ENCODE measurements at regions of chr12 and their contacts with region 1.

Region 1: DNA sequence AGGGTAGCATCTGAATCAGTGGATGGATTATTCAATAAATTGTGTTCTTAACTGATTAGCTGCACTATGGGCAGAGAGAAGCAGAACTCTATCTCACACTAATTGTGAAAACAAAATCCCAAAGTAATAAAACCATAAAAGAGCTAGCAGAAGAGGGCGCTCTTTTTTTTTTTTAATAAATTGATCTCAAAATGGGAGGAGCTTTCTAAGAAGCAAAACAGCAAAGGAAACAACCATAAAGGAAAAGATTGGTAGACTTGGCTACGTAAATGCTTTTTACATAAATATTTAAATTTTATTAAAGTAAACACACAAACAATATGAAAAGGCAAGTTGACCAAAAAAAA is 1.5 kb upstream of the TM7SF3 start:
- DNase-seq: no peak
- H3K4me3 ChIP-seq: no peak overlapping the region
- CTCF ChIP-seq: no peak
- POLR2A ChIP-seq: no peak

Region 2: DNA sequence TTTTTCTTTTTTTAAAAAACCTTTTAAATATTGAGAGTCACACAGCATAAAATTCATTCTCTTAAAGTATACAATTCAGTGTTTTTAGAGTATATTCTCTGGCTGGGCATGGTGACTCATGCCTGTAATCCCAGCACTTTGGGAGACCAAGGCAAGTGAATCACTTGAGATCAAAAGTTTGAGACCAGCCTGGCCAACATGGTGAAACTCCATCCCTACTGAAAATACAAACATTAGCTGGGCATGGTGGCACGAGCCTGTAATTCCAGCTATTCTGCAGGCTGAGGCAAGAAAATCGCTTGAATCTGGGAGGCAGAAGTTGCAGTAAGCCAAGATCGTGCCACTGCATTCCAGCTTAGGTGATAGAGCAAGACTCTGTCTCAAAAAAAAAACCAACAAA is 1998.4 kb before region 1 on chr12:
- intact Hi-C with region 1: no loop called
- DNase-seq: no peak
- H3K4me3 ChIP-seq: no peak overlapping the region
- CTCF ChIP-seq: no peak
- POLR2A ChIP-seq: no peak

Region 3: GRCh38 chr12:26668847-26669246 is 346.9 kb before region 1 on chr12:
- intact Hi-C with region 1: no loop called
- DNase-seq: no peak
- H3K4me3 ChIP-seq: no peak overlapping the region
- CTCF ChIP-seq: no peak
- POLR2A ChIP-seq: no peak

Region 4: GRCh38 chr12:27305673-27306456 is 290.2 kb after region 1 on chr12:
- intact Hi-C with region 1: loop called (anchors 5 kb)
- DNase-seq: no peak
- H3K4me3 ChIP-seq: no peak overlapping the region
- CTCF ChIP-seq: no peak
- POLR2A ChIP-seq: no peak

Measured in lower leg skin (tissue), 4 donors.